Prostate gland (tissue), 2 donors: ENCODE measurements at regions of chr10 and their contacts with region 1.

Region 1: DNA sequence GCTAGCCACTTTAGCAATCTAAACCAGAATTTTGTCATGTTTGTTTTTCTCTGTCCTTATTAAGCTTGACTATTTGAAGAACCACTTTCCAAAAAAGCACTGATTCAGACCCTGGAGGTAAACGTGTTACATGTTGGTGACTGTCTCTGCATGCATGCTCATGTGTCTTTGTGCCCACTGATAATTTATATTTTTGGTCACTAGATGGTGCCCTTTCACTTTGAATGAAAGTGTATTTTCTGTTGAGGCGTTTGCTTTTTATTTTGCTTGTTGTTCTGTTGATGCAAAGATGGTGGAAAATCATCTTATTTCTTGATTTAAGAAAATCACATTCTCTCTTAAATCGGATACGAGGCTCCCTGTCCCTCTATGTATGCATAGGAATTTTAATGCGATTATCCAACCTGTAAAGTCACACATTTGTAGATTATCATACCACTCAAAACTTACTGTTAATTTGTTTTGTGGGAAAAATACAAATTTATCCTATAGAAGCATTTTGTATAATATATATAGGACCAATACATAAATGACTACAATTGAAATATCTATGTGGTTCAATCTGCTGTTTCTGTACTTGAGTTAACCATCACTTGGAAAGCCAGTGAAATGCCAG is 269.3 kb downstream of the BICC1 start:
- DNase-seq: peak; percentile 47
- H3K4me3 ChIP-seq: no peak overlapping the region
- H3K27ac ChIP-seq: no peak overlapping the region
- H3K4me1 ChIP-seq: no peaks in the 10 kb centered on the region
- H3K27me3 ChIP-seq: no peaks in the 10 kb centered on the region
- CTCF ChIP-seq: peak; percentile 40 to 68 (median 62)
- POLR2A ChIP-seq: no peak

Region 2: DNA sequence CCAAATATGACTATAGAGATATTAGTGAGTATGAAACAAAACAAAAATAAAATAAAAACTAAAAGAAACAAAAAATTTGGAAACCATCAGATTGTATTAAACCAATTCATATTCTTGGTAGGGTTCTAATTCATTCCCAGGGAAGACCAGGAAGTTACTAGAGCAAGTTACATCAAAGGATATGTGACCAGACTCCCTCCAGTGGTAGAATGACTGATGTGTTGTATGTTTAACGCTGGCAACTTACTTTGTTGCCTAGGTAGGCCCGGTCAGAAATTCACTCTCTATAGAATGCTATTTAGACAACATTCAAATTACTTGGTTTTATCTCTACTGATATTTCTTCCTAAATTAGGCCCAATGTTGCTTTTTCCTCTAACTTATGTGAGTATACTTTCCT is 399.7 kb after region 1 on chr10:
- intact Hi-C with region 1: loop called (anchors 5 kb)
- DNase-seq: peak; percentile 59
- H3K4me3 ChIP-seq: no peak overlapping the region
- H3K27ac ChIP-seq: no peak overlapping the region
- H3K4me1 ChIP-seq: no peaks in the 10 kb centered on the region
- H3K27me3 ChIP-seq: no peaks in the 10 kb centered on the region
- CTCF ChIP-seq: peak; percentile 12 to 69 (median 60)
- POLR2A ChIP-seq: no peak